AG04449 (cell line): ENCODE measurements at regions of chrX and their contacts with region 1.

Region 1: GRCh38 chrX:65528705-65529340 is 5.8 kb downstream of the LAS1L start:
- DNase-seq: no peak
- H3K4me3 ChIP-seq: no peak overlapping the region
- CTCF ChIP-seq: peak; percentile 87

Region 2: DNA sequence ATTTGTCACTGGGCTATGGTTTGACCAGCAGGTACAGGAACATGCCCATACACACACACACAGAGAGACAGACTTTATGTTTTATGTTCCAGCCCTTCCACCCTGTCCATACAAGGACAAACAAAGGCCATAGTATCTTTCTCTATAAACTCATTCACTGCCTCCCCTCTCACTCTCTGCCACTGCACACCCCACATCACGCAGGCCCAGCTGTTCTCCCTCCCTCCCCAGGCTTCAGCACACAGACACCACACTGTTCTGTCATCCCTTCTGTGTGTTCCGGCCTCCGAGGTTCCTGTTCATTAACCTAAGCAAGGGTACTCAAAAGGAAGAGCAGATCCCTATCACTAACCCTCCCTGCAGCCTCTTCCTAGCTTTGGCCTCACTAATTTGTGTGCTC is 12.1 kb before region 1 on chrX:
- CTCF ChIA-PET with region 1: interaction called, 20 read pairs
- POLR2A ChIA-PET with region 1: no interaction called
- DNase-seq: no peak
- H3K4me3 ChIP-seq: no peak overlapping the region
- CTCF ChIP-seq: no peak